ENCODE measurements at regions of chr5 and their contacts with region 1.

Region 1: GRCh38 chr5:32942225-32942989 is 231.3 kb downstream of the NPR3 start:
- DNase-seq: peak; percentile 55
- ATAC-seq: peak; percentile 87
- H3K4me3 ChIP-seq: no peak overlapping the region
- H3K27ac ChIP-seq: no peak overlapping the region
- H3K4me1 ChIP-seq: no peaks in the 10 kb centered on the region
- H3K27me3 ChIP-seq: no peaks in the 10 kb centered on the region
- CTCF ChIP-seq: peak; percentile 27 to 68 (median 66); a peak in 5 of 6 replicates
- POLR2A ChIP-seq: no peak
- RAD21 ChIP-seq: peak; percentile 43; the same call in 1 of the 2 replicates

Region 2: DNA sequence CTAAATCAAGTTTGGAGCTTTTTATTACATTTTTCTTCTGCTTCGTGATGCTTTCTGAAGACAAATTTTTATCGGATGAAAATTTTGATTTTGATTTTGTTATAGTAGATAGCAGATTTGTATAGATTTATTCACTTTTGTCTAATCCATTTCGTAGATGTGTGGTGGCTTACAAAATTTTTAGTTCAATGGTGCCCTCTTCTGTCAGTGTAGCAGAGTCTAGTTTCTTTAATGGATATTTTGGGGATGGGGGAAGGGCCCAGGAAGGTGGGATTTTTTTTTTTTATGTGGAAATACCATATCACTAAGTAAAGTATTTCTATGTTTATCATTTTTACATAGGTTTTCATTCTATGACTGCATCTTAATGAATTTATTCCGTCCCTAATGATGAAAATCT is 238.5 kb after region 1 on chr5:
- CTCF ChIA-PET with region 1: no interaction called
- POLR2A ChIA-PET with region 1: no interaction called
- RAD21 ChIA-PET with region 1: no interaction called
- intact Hi-C with region 1: loop called (anchors 10 kb)
- DNase-seq: peak; percentile 28
- ATAC-seq: no peak
- H3K4me3 ChIP-seq: no peak overlapping the region
- H3K27ac ChIP-seq: no peak overlapping the region
- H3K4me1 ChIP-seq: no peaks in the 10 kb centered on the region
- H3K27me3 ChIP-seq: no peaks in the 10 kb centered on the region
- CTCF ChIP-seq: peak; percentile 36 to 63 (median 59); a peak in 5 of 6 replicates
- POLR2A ChIP-seq: no peak
- RAD21 ChIP-seq: peak; percentile 76

Region 3: DNA sequence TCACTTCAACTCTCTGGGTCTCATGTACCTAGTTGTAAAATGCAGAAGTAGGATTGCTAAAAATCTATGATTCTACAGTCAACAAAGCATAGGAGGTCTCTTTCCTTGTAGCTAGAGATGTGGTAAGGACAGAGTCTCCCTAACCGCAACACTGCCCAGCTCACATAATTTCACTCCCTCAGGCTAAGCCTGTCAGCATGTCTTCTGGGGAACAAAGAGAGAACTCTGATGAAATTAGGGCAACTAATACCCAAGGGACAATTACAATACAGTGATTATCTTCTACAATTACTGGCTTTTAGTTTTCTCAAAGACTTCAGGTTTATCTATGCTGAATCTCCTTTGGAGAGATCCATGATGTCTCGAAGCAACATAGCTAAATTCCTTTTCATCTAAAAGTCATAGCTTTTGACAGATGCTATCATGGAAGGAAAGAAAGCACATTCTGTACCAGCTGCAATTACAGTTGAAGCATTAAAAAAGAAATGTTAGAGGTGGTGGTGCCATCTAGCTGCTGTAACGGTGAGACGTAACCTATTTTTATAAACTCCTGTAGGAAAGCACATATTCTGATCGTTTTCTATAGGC is 357.3 kb after region 1 on chr5:
- CTCF ChIA-PET with region 1: no interaction called
- POLR2A ChIA-PET with region 1: no interaction called
- RAD21 ChIA-PET with region 1: no interaction called
- intact Hi-C with region 1: loop called (anchors 10 kb)
- DNase-seq: peak; percentile 12
- ATAC-seq: peak; percentile 82
- H3K4me3 ChIP-seq: no peak overlapping the region
- H3K27ac ChIP-seq: no peak overlapping the region
- H3K4me1 ChIP-seq: no peaks in the 10 kb centered on the region
- H3K27me3 ChIP-seq: no peaks in the 10 kb centered on the region
- CTCF ChIP-seq: peak; percentile 37 to 59 (median 42); a peak in 5 of 6 replicates
- POLR2A ChIP-seq: no peak
- RAD21 ChIP-seq: peak; percentile 60